A549 (cell line): ENCODE measurements at regions of chr10 and their contacts with region 1.

Region 1: GRCh38 chr10:36880898-36881297 is 244.5 kb upstream of the ANKRD30A start:
- DNase-seq: peak; percentile 6 to 45
- ATAC-seq: peak in 1 of 2 experiments; percentile 66; a peak in 2 of 6 replicates
- H3K4me3 ChIP-seq: no peak overlapping the region
- H3K27ac ChIP-seq: no peak overlapping the region
- H3K4me1 ChIP-seq: no peaks in the 10 kb centered on the region
- CTCF ChIP-seq: peak; percentile 71
- EP300 ChIP-seq: no peak
- POLR2A ChIP-seq: no peak
- RAD21 ChIP-seq: peak; percentile 68 to 85

Region 2: GRCh38 chr10:35613597-35614226 is 1267.2 kb before region 1 on chr10:
- CTCF ChIA-PET with region 1: interaction called, 15 read pairs
- POLR2A ChIA-PET with region 1: no interaction called
- DNase-seq: peak; percentile 22 to 46
- ATAC-seq: peak; percentile 88 to 91; a peak in 5 of 6 replicates
- H3K4me3 ChIP-seq: no peak overlapping the region
- H3K27ac ChIP-seq: no peak overlapping the region
- H3K4me1 ChIP-seq: no peaks in the 10 kb centered on the region
- CTCF ChIP-seq: peak; percentile 60
- EP300 ChIP-seq: no peak
- POLR2A ChIP-seq: no peak
- RAD21 ChIP-seq: peak; percentile 72 to 75

Region 3: DNA sequence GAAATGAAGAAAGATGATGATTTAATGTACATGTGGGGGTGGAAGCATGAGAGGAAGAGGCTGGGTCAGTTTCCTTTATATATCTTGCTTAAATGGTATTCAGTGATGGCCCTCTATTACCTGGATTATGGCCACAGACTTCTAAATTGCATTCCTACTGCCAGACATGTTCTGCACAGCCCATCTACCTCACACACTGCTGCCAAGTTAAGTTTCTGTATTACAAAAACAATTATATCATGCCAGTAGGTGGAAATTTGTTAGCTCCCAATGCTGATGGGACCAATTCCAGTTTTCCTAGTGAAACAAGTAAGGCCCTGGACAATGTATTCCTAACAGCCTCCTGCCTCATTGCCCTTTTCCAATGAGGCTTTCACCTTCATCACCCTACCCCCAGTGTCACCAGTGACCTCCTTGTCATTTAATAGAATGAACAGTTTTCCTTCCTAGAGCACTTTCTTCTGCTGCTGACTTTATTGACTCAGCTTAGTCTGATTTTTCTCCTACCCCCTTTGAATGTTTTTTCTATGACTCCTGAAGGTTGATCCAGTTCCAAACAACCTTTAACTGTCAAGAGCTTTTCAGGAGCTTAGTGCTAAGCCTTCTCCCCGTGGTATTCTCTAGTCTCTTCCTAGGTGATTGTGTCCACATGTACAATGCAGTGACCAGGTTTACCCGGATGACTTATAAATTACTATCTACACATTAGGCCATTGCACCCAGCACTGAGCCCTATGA is 72.1 kb before region 1 on chr10:
- CTCF ChIA-PET with region 1: no interaction called
- POLR2A ChIA-PET with region 1: no interaction called
- DNase-seq: no peak
- ATAC-seq: no peak
- H3K4me3 ChIP-seq: no peak overlapping the region
- H3K27ac ChIP-seq: no peak overlapping the region
- H3K4me1 ChIP-seq: no peaks in the 10 kb centered on the region
- CTCF ChIP-seq: no peak
- EP300 ChIP-seq: no peak
- POLR2A ChIP-seq: no peak
- RAD21 ChIP-seq: no peak